Common myeloid progenitor, CD34-positive (primary cell): ENCODE measurements at regions of chr1 and their contacts with region 1.

Region 1: GRCh38 chr1:206734499-206735142 is 36.0 kb upstream of the IL19 start:
- DNase-seq: peak; percentile 36 to 69 (median 65)
- H3K4me3 ChIP-seq: no peak overlapping the region
- H3K27ac ChIP-seq: no peak overlapping the region
- H3K4me1 ChIP-seq: peaks cover 0 to 38% (median 36%) of the 10 kb centered on the region in 4 experiments
- H3K27me3 ChIP-seq: no peaks in the 10 kb centered on the region

Region 2: DNA sequence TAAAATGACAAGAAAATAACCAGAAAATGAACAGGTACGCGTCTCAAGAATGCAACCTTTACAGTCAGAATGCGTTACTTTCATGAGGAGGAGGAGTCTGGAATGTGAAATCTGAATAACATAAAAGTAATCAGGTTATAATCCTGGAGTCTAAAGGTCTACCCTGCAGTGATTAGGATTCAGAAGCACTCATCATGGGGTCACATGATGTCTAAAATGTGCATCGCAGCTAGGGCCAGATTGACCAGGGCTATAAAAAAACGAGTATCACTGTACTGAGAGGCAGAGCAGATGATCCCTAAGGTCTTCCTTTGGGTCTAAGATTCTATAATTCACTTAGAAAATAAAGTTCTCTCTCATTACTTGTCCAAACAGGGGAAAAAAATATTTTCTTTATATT is 129.8 kb before region 1 on chr1:
- CTCF ChIA-PET with region 1: no interaction called
- POLR2A ChIA-PET with region 1: no interaction called
- DNase-seq: no peak
- H3K4me3 ChIP-seq: no peak overlapping the region
- H3K27ac ChIP-seq: no peak overlapping the region
- H3K4me1 ChIP-seq: peaks cover 0 to 12% (median 5%) of the 10 kb centered on the region in 4 experiments
- H3K27me3 ChIP-seq: no peaks in the 10 kb centered on the region

Region 3: GRCh38 chr1:206716870-206717673 is 17.5 kb before region 1 on chr1:
- CTCF ChIA-PET with region 1: interaction called, 14 read pairs
- POLR2A ChIA-PET with region 1: interaction called, 3 read pairs
- DNase-seq: peak in 2 of 3 donors; percentile 50 to 63
- H3K4me3 ChIP-seq: peak overlapping the region in 3 of 7 experiments; percentile 23 to 48 (median 37)
- H3K27ac ChIP-seq: peak overlapping the region; percentile 7 to 71
- H3K4me1 ChIP-seq: peaks cover 22 to 49% (median 34%) of the 10 kb centered on the region in 4 experiments
- H3K27me3 ChIP-seq: no peaks in the 10 kb centered on the region

Region 4: DNA sequence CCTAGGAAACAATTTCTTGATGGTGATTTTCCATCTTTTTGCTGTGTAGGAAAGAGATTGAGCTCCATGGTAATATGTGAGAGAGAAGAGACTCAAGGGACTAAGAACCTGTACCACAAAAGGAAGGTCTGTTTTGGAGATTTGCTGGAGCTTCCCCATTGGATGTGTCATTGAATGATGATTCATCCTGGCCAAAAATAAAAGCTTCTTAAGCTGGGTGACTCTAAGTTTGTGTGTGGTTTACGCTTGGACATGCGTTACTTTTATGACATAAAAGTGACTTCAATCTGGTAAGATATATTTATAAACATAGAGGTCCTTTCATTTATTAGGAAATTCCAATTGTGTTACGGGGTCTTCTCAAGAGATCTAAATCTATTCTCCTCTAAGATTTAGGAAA is 18.5 kb after region 1 on chr1:
- CTCF ChIA-PET with region 1: interaction called, 11 read pairs
- POLR2A ChIA-PET with region 1: no interaction called
- DNase-seq: peak in 2 of 3 donors; percentile 47 to 51
- H3K4me3 ChIP-seq: no peak overlapping the region
- H3K27ac ChIP-seq: no peak overlapping the region
- H3K4me1 ChIP-seq: peaks cover 6 to 17% (median 10%) of the 10 kb centered on the region in 4 experiments
- H3K27me3 ChIP-seq: no peaks in the 10 kb centered on the region

Region 5: DNA sequence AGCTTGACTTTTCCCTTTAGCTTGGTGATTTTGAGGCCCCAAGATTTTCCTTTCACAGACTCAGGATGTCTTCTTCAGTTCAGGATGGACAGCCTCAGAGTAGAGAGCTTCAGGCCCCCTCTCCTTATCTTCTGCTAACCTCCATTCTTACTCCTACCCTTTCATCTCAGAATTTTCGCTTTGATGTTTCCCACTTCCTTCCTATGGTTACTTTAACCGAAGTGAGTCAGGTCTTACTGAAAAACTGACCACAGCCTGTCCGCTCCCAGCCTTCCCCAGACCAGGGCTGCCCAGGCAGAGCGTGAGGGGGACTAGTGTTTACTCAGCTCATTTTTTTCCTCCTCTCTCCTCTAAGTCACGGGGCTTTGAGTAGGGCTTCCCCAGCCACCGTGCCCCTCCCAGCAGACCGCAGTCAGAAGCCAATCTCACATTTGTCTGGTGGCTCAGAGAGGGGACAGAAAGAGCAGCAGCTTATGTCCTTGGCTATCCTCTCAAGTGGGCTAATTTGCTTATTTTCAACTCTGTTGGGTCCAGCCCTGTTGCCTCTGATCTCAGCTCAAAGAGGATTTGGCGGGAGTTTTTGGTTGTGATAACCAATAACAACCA is 31.7 kb after region 1 on chr1:
- CTCF ChIA-PET with region 1: interaction called, 18 read pairs
- POLR2A ChIA-PET with region 1: no interaction called
- DNase-seq: peak; percentile 67 to 85 (median 82)
- H3K4me3 ChIP-seq: peak overlapping the region in 3 of 7 experiments; percentile 36 to 52 (median 39)
- H3K27ac ChIP-seq: no peak overlapping the region
- H3K4me1 ChIP-seq: peaks cover 7 to 62% (median 39%) of the 10 kb centered on the region in 4 experiments
- H3K27me3 ChIP-seq: no peaks in the 10 kb centered on the region